Activated CD4-positive, alpha-beta memory T cell treated with anti-CD3 and anti-CD28 coated beads, Interleukin-2, amount 10 ng/mL, durations not matched to agents 7 days and 5 days (primary cell): ENCODE measurements at regions of chr21 and their contacts with region 1.

Region 1: DNA sequence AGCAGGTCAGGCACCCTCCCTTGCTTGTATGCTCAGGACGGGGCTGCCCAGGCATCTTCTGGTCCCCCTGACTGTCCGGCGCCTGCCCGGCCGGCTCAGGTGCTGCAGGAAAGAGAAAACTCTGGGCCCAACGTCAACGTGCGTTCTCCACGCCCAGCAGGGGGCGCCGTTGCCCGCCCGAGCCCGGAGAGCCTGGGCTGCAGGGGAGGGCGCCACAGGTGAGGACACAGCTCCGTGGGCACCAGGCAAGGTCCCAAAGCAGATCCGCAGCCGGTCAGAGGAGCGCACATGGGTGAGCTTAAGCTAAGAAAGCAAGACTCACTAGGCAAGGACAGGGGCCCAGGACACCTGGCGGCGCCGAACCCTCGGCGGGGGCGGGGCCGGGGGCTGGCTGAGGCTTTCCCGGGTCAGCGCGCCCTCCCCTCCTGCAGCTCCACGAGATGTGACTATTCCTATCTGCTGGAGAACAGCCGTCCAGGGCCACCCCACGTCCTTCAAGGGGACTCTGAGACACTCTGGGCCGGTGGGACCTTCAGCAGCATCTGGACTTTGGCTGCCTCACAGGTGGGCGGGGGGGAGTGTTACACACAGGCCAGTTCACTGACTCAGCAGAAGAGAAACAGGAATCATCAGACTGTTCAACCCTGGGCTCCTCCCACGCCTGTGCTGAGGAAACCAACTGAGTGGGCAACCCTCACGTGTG is 29.3 kb downstream of the KRTAP10-1 start:
- DNase-seq: peak; percentile 84
- H3K4me3 Mint-ChIP-seq: no peak overlapping the region
- H3K27ac Mint-ChIP-seq: no peak overlapping the region
- H3K4me1 Mint-ChIP-seq: peaks cover 6% of the 10 kb centered on the region
- H3K27me3 Mint-ChIP-seq: no peaks in the 10 kb centered on the region

Region 2: DNA sequence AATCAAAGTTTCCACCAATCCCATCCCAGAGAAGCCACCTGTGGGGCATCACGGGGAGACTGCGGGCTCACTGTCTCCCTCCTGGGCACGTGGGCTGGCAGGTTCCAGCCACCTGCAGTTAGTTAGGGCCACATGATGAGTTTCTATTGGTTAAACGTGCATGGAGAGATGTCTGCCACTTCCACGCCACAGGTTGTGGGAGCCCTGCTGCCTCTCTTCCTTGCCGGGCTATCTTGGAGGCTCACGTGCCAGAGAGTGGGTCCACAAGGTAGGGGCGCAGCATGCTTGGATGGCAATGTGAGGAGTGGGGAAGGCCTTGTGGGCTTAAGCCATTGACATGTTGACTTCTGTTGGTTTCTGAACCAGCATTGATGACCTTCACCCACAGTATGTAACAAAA is 93.3 kb after region 1 on chr21:
- CTCF ChIA-PET with region 1: no interaction called
- POLR2A ChIA-PET with region 1: no interaction called
- DNase-seq: no peak
- H3K4me3 Mint-ChIP-seq: no peak overlapping the region
- H3K27ac Mint-ChIP-seq: no peak overlapping the region
- H3K4me1 Mint-ChIP-seq: no peaks in the 10 kb centered on the region
- H3K27me3 Mint-ChIP-seq: peaks cover 22% of the 10 kb centered on the region

Region 3: GRCh38 chr21:44742418-44743153 is 231.9 kb after region 1 on chr21:
- CTCF ChIA-PET with region 1: interaction called, 16 read pairs
- POLR2A ChIA-PET with region 1: interaction called, 3 read pairs
- DNase-seq: no peak
- H3K4me3 Mint-ChIP-seq: no peak overlapping the region
- H3K27ac Mint-ChIP-seq: no peak overlapping the region
- H3K4me1 Mint-ChIP-seq: no peaks in the 10 kb centered on the region
- H3K27me3 Mint-ChIP-seq: peaks cover 11% of the 10 kb centered on the region